MCF 10A (cell line): ENCODE measurements at regions of chr22 and their contacts with region 1.

Region 1: GRCh38 chr22:29470159-29470855 is 9.7 kb upstream of the NEFH start:
- DNase-seq: peak; percentile 76
- H3K4me3 Mint-ChIP-seq: peak overlapping the region; percentile 61
- H3K27ac Mint-ChIP-seq: no peak overlapping the region
- H3K4me1 Mint-ChIP-seq: peaks cover 6% of the 10 kb centered on the region
- H3K27me3 Mint-ChIP-seq: peaks cover 20% of the 10 kb centered on the region
- CTCF ChIP-seq: peak; percentile 97

Region 2: GRCh38 chr22:29480512-29481264 is 10.4 kb after region 1 on chr22:
- CTCF ChIA-PET with region 1: interaction called, 10 read pairs
- POLR2A ChIA-PET with region 1: interaction called, 3 read pairs
- intact Hi-C with region 1: no loop called
- DNase-seq: no peak
- H3K4me3 Mint-ChIP-seq: no peak overlapping the region
- H3K27ac Mint-ChIP-seq: no peak overlapping the region
- H3K4me1 Mint-ChIP-seq: peaks cover 6% of the 10 kb centered on the region
- H3K27me3 Mint-ChIP-seq: peaks cover 44% of the 10 kb centered on the region
- CTCF ChIP-seq: no peak

Region 3: GRCh38 chr22:29493636-29494035 is 23.3 kb after region 1 on chr22:
- CTCF ChIA-PET with region 1: interaction called, 14 read pairs
- POLR2A ChIA-PET with region 1: no interaction called
- intact Hi-C with region 1: no loop called
- DNase-seq: no peak
- H3K4me3 Mint-ChIP-seq: no peak overlapping the region
- H3K27ac Mint-ChIP-seq: no peak overlapping the region
- H3K4me1 Mint-ChIP-seq: no peaks in the 10 kb centered on the region
- H3K27me3 Mint-ChIP-seq: peaks cover 7% of the 10 kb centered on the region
- CTCF ChIP-seq: no peak

Region 4: DNA sequence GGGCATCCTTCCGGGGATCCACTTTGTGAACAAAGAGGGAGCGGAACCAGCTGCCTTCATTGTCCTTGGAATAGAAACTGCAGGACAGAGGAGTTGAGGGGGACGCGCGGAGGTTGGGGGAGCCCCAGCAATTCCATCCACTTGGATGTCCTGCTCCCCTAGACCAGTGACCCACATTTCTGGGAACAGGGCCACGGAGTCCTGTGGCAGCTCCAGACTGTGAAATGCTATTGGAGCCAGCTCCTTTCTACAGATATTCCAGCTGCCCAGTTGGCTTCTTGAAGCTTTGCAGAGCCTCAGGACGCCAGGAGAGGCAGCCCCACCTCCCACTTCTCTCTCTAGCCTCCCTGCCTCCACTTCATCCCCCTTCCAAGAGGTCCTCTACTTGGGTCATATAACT is 100.1 kb after region 1 on chr22:
- CTCF ChIA-PET with region 1: no interaction called
- POLR2A ChIA-PET with region 1: no interaction called
- intact Hi-C with region 1: no loop called
- DNase-seq: no peak
- H3K4me3 Mint-ChIP-seq: no peak overlapping the region
- H3K27ac Mint-ChIP-seq: no peak overlapping the region
- H3K4me1 Mint-ChIP-seq: peaks cover 5% of the 10 kb centered on the region
- H3K27me3 Mint-ChIP-seq: no peaks in the 10 kb centered on the region
- CTCF ChIP-seq: no peak